Prostate gland (tissue), 2 donors: ENCODE measurements at regions of chr6 and their contacts with region 1.

Region 1: GRCh38 chr6:56370561-56371211 is 123.3 kb upstream of the COL21A1 start:
- DNase-seq: peak; percentile 71
- H3K4me3 ChIP-seq: no peak overlapping the region
- H3K27ac ChIP-seq: peak overlapping the region; percentile 4 to 69
- H3K4me1 ChIP-seq: peaks cover 7% of the 10 kb centered on the region
- H3K27me3 ChIP-seq: no peaks in the 10 kb centered on the region
- CTCF ChIP-seq: no peak
- POLR2A ChIP-seq: no peak

Region 2: DNA sequence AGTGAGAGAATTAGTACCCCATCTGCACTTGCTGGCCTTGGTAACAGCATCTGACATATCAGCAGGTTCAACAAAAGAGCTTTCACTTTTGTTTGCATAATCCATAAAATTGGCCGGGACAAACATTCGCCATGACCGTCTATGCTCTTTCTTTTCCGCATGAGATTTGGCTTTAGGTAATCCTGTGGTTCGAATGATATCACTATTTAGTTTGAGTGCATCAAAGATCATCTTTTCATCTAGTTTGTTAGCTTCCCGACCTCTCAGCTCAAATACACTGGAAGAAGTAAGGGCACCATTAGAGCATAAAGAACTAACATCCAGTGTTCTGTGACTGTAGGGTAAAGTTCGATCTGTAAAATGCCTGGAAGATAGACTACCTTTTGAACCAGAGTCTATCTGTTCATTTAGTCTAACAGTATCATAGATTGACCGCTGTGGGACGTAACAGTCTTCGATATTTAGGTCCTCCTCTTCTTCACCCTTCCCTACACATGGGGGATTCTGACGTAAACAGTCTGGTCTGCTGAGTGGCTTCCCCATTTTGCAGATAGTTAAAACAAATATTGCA is 170.4 kb after region 1 on chr6:
- intact Hi-C with region 1: loop called (anchors 2 kb)
- DNase-seq: no peak
- H3K4me3 ChIP-seq: peak overlapping the region; percentile 50 to 53
- H3K27ac ChIP-seq: peak overlapping the region; percentile 95 to 97
- H3K4me1 ChIP-seq: no peaks in the 10 kb centered on the region
- H3K27me3 ChIP-seq: no peaks in the 10 kb centered on the region
- CTCF ChIP-seq: no peak
- POLR2A ChIP-seq: no peak

Region 3: GRCh38 chr6:56549014-56549413 is 178.3 kb after region 1 on chr6:
- intact Hi-C with region 1: loop called (anchors 2 kb)
- DNase-seq: no peak
- H3K4me3 ChIP-seq: no peak overlapping the region
- H3K27ac ChIP-seq: peak overlapping the region in 1 of 2 donors; percentile 38
- H3K4me1 ChIP-seq: no peaks in the 10 kb centered on the region
- H3K27me3 ChIP-seq: no peaks in the 10 kb centered on the region
- CTCF ChIP-seq: peak in 3 of 4 experiments; percentile 24 to 60 (median 49)
- POLR2A ChIP-seq: no peak

Region 4: GRCh38 chr6:57029188-57029587 is 658.5 kb after region 1 on chr6:
- intact Hi-C with region 1: no loop called
- DNase-seq: no peak
- H3K4me3 ChIP-seq: no peak overlapping the region
- H3K27ac ChIP-seq: no peak overlapping the region
- H3K4me1 ChIP-seq: no peaks in the 10 kb centered on the region
- H3K27me3 ChIP-seq: no peaks in the 10 kb centered on the region
- CTCF ChIP-seq: no peak
- POLR2A ChIP-seq: no peak